ENCODE measurements at regions of chr6 and their contacts with region 1.

Region 1: GRCh38 chr6:36594029-36594815 is at the start of gene SRSF3:
- DNase-seq: peak; percentile 99
- H3K4me3 ChIP-seq: peak within 1 kb of the TSS; percentile 74 to 98
- H3K27ac ChIP-seq: peak within 1 kb of the TSS; percentile 98 to 99
- H3K4me1 ChIP-seq: peaks cover 28% of the 10 kb centered on the region
- H3K27me3 ChIP-seq: no peaks in the 10 kb centered on the region
- CTCF ChIP-seq: peak; percentile 21 to 52 (median 47)
- POLR2A ChIP-seq: peak; percentile 87
- total RNA-seq, gene SRSF3: 180 to 183 TPM

Region 2: GRCh38 chr6:36546920-36547645 is 47.1 kb before region 1 on chr6 and contains the start of gene STK38:
- intact Hi-C with region 1: loop called (anchors 10 kb)
- DNase-seq: peak; percentile 91
- H3K4me3 ChIP-seq: peak within 1 kb of the TSS; percentile 73 to 84
- H3K27ac ChIP-seq: peak within 1 kb of the TSS; percentile 91 to 93
- H3K4me1 ChIP-seq: peaks cover 20% of the 10 kb centered on the region
- H3K27me3 ChIP-seq: no peaks in the 10 kb centered on the region
- CTCF ChIP-seq: no peak
- POLR2A ChIP-seq: peak; percentile 95
- total RNA-seq, gene STK38: 20.4 to 23.9 TPM

Region 3: DNA sequence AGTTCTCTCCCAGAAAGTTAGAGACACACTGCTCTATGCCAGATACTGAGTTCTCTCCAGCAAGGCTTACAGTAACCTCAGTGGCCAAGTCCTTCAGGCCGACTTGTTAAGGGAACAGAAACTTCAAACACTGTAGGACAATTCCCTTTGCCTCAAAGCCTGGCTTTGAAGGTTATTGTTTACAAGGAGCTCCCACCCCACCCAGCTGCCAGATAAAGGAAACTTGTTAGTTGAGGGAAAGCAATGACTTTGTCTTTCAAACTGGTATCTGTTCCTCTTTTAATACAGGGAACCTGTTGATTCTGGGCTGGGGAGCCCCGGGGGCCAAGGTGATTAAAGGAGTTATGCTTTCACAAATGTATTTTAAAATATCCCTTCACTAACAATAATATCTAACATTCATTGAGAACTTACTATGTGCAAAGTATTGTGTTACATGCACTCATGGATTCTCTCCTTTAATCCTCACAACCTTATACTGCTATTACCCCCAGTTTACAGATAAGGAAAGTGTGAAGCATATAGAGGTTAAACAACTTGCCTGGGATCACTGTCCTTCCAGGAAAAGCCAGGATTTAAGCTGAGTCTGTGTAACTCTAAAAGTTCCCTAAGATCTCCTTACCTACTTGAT is 56.7 kb after region 1 on chr6:
- intact Hi-C with region 1: no loop called
- DNase-seq: no peak
- H3K4me3 ChIP-seq: no peak overlapping the region
- H3K27ac ChIP-seq: no peak overlapping the region
- H3K4me1 ChIP-seq: peaks cover 7% of the 10 kb centered on the region
- H3K27me3 ChIP-seq: no peaks in the 10 kb centered on the region
- CTCF ChIP-seq: no peak
- POLR2A ChIP-seq: no peak

Region 4: DNA sequence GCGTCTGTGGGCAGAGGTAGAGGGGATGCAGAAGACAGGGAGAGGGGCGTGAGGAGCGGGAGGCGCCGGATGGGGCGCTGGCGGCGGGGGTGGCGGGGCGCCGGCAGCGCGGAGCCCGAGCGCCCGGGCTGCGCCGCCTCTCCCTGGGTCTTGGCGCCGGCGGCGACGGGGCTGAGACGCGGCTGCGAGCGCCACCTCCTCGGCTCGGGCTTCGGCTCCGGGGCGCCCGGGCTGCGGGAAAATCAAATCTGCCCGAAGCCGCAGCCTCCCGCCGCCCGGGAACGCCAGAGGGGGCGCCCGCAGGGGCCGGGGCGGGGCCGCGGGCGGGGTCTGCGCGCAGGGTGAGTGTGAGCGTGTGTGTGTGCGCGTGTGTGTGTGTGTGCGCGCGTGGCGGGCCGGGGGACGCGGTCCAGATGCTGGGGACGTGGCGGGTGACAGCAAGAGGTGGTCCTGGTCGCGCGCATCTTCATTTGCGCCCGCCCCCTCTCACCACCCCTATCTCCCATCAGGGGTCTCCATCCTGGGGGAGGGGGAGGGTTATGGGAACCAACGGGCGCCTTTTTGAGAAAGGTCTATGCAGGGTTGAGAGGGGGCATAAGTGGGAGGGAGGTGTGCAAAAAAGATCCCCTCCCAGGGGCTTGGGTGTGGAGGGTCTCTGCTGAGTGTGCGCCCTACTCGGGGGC is 245.7 kb after region 1 on chr6:
- intact Hi-C with region 1: no loop called
- DNase-seq: no peak
- H3K4me3 ChIP-seq: peak overlapping the region; percentile 53 to 72
- H3K27ac ChIP-seq: peak overlapping the region; percentile 71 to 87
- H3K4me1 ChIP-seq: peaks cover 24% of the 10 kb centered on the region
- H3K27me3 ChIP-seq: no peaks in the 10 kb centered on the region
- CTCF ChIP-seq: peak in 2 of 3 experiments; percentile 11 to 26
- POLR2A ChIP-seq: no peak